ENCODE measurements at regions of chr9 and their contacts with region 1.

Region 1: DNA sequence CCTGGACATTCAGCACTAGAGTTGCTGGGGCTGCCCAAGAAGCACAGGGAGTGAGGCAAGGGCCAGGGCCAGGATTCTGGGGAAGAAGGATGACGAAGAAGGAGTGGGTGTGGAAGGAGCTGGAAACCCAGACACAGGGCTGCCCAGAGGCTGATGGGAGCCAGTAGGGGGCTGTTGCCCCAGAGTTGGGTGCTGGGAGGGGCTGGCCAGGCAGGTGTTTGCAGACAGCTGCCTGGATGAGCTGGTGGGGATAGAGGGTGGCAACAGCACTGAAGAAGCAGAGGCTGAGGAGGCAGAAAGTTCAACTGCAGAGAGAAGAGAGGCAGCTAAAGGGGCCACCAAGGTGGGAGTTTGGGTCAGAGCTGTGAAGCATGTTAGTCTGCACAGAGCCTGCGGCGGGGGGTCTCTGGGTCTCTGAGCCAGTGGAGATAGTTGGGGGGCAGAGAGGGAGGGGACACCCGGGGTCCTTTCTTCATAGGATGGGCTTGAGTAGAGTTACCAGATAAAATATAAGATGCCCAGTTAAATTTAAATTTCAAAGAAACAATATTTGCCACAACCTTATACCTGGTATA is 2.5 kb upstream of the AQP7 start:
- DNase-seq: no peak
- ATAC-seq: no peak
- H3K4me3 ChIP-seq: no peak overlapping the region
- H3K27ac ChIP-seq: no peak overlapping the region
- H3K4me1 ChIP-seq: no peaks in the 10 kb centered on the region
- H3K27me3 ChIP-seq: no peaks in the 10 kb centered on the region
- CTCF ChIP-seq: no peak
- EP300 ChIP-seq: no peak
- POLR2A ChIP-seq: no peak
- RAD21 ChIP-seq: no peak

Region 2: DNA sequence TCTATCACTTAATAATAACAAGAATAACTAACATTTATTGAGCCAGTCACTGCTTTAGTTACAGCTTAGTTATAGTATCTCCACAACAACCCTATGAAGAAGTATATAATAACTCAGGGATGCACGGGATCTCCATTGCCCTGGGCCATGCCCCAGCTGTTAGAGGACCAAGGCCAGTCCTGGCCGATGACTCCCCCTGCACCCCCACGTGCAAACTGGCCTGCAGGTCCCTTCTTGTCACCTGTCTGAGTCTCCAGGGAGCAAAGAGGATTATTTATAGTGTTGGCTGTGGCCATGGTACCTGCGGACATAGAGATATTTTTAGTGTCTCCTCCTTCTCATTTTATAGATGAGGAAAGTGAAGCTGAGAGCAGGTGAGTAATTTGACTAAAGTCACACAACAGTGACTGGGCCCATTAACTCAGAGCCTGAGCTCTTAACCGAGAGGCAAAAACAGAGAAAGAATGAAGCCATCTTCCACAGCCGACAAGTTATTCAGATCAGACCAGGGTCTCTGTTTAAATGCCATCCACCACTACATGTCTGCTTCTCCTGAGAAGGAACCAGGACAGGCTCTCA is 527.1 kb before region 1 on chr9:
- CTCF ChIA-PET with region 1: no interaction called
- POLR2A ChIA-PET with region 1: no interaction called
- RAD21 ChIA-PET with region 1: no interaction called
- SMC1A ChIA-PET with region 1: no interaction called
- in situ Hi-C with region 1: no loop called
- intact Hi-C with region 1: no loop called
- DNase-seq: no peak
- ATAC-seq: no peak
- H3K4me3 ChIP-seq: no peak overlapping the region
- H3K27ac ChIP-seq: no peak overlapping the region
- H3K4me1 ChIP-seq: no peaks in the 10 kb centered on the region
- H3K27me3 ChIP-seq: peaks cover 0 to 2% of the 10 kb centered on the region in 2 experiments; a peak in 1 of 4 replicates
- CTCF ChIP-seq: no peak
- EP300 ChIP-seq: no peak
- POLR2A ChIP-seq: no peak
- RAD21 ChIP-seq: no peak

Region 3: GRCh38 chr9:33415501-33416038 is 10.7 kb after region 1 on chr9:
- CTCF ChIA-PET with region 1: interaction called, 32 read pairs
- POLR2A ChIA-PET with region 1: no interaction called
- RAD21 ChIA-PET with region 1: interaction called, 9 read pairs
- SMC1A ChIA-PET with region 1: no interaction called
- in situ Hi-C with region 1: no loop called
- intact Hi-C with region 1: no loop called
- DNase-seq: peak; percentile 3
- ATAC-seq: peak; percentile 93
- H3K4me3 ChIP-seq: no peak overlapping the region
- H3K27ac ChIP-seq: no peak overlapping the region
- H3K4me1 ChIP-seq: no peaks in the 10 kb centered on the region
- H3K27me3 ChIP-seq: no peaks in the 10 kb centered on the region; a peak in 1 of 4 replicates
- CTCF ChIP-seq: peak; percentile 60 to 85 (median 78)
- EP300 ChIP-seq: no peak
- POLR2A ChIP-seq: no peak
- RAD21 ChIP-seq: peak; percentile 45

Region 4: GRCh38 chr9:33452828-33453271 is 48.0 kb after region 1 on chr9:
- CTCF ChIA-PET with region 1: interaction called, 113 read pairs
- POLR2A ChIA-PET with region 1: no interaction called
- RAD21 ChIA-PET with region 1: interaction called, 15 read pairs
- SMC1A ChIA-PET with region 1: interaction called, 10 read pairs
- in situ Hi-C with region 1: no loop called
- intact Hi-C with region 1: no loop called
- DNase-seq: no peak
- ATAC-seq: peak; percentile 84
- H3K4me3 ChIP-seq: no peak overlapping the region
- H3K27ac ChIP-seq: no peak overlapping the region
- H3K4me1 ChIP-seq: peaks cover 32% of the 10 kb centered on the region
- H3K27me3 ChIP-seq: 0 out of 4 replicates have a peak, but pooled peaks cover 0 to 1% of the 10 kb centered on the region in 2 experiments
- CTCF ChIP-seq: peak; percentile 52 to 78 (median 70)
- EP300 ChIP-seq: no peak
- POLR2A ChIP-seq: no peak
- RAD21 ChIP-seq: peak; percentile 60

Region 5: DNA sequence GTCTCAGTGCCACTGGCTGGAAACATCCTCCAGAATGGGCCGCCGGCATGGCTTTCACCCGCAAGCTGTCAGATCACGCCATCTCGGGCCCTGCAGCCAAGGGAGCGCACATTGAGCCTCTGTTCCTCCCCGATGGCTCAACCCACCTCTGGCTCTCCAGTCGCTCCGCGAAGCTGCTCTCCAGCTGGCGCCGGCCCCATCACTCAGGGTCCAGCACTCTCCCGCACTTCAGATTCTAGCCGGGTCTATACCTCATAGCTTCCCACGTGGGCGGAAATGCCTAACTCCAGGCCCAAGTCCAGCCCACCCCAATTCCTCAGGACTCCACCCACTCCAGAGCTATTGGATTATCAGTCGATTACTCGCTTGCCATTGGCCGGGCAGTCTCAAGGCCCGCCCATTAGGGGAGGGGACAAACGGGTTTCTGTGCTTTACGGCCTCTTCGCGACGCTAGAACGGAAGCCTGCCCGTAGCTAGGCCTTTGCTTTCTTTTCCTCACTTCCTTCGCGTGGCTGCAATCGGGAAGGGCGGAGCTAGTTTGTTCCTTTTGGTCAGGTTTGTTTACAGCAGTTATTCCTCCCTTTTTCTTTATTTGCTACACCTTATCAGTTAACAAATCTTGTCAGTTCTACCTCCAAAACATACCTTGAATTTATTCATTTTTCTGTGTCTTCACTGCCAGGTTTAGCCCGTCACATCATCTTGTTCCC is 68.9 kb after region 1 on chr9 and contains the start of gene NOL6:
- CTCF ChIA-PET with region 1: interaction called, 11 read pairs
- POLR2A ChIA-PET with region 1: no interaction called
- RAD21 ChIA-PET with region 1: interaction called, 39 read pairs
- SMC1A ChIA-PET with region 1: interaction called, 3 read pairs
- in situ Hi-C with region 1: no loop called
- intact Hi-C with region 1: no loop called
- DNase-seq: peak; percentile 99
- ATAC-seq: peak; percentile 100
- H3K4me3 ChIP-seq: peak within 1 kb of the TSS; percentile 96
- H3K27ac ChIP-seq: peak within 1 kb of the TSS; percentile 54
- H3K4me1 ChIP-seq: peaks cover 7% of the 10 kb centered on the region
- H3K27me3 ChIP-seq: no peaks in the 10 kb centered on the region
- CTCF ChIP-seq: no peak
- EP300 ChIP-seq: no peak
- POLR2A ChIP-seq: peak; percentile 84
- RAD21 ChIP-seq: no peak
- polyA plus RNA-seq, gene NOL6: 8.3 to 13.2 TPM

Region 6: GRCh38 chr9:33721674-33722358 is 316.9 kb after region 1 on chr9:
- CTCF ChIA-PET with region 1: no interaction called
- POLR2A ChIA-PET with region 1: no interaction called
- RAD21 ChIA-PET with region 1: no interaction called
- SMC1A ChIA-PET with region 1: no interaction called
- in situ Hi-C with region 1: no loop called
- intact Hi-C with region 1: loop called (anchors 2 kb)
- DNase-seq: peak; percentile 17
- ATAC-seq: peak; percentile 86
- H3K4me3 ChIP-seq: no peak overlapping the region
- H3K27ac ChIP-seq: no peak overlapping the region
- H3K4me1 ChIP-seq: no peaks in the 10 kb centered on the region
- H3K27me3 ChIP-seq: no peaks in the 10 kb centered on the region
- CTCF ChIP-seq: peak; percentile 99 to 100 (median 100)
- EP300 ChIP-seq: no peak
- POLR2A ChIP-seq: no peak
- RAD21 ChIP-seq: peak; percentile 89

Measured in GM12878 (cell line).